ENCODE measurements at regions of chr17 and their contacts with region 1.

Region 1: GRCh38 chr17:35969558-35970380 is 11.5 kb downstream of the CCL16 start:
- DNase-seq: peak; percentile 45 to 80 (median 68)
- H3K4me3 ChIP-seq: no peak overlapping the region
- H3K4me3 Mint-ChIP-seq: no peak overlapping the region
- H3K27ac ChIP-seq: no peak overlapping the region
- H3K27ac Mint-ChIP-seq: peak overlapping the region in 2 of 8 donors; percentile 3 to 73
- H3K4me1 ChIP-seq: no peaks in the 10 kb centered on the region
- H3K4me1 Mint-ChIP-seq: peaks cover 7 to 16% (median 8%) of the 10 kb centered on the region in 3 donors
- H3K27me3 ChIP-seq: no peaks in the 10 kb centered on the region
- H3K27me3 Mint-ChIP-seq: no peaks in the 10 kb centered on the region

Region 2: GRCh38 chr17:35953720-35954119 is 16.0 kb before region 1 on chr17:
- CTCF ChIA-PET with region 1: interaction called, 10 read pairs
- POLR2A ChIA-PET with region 1: no interaction called
- DNase-seq: no peak
- H3K4me3 ChIP-seq: no peak overlapping the region
- H3K4me3 Mint-ChIP-seq: no peak overlapping the region
- H3K27ac ChIP-seq: no peak overlapping the region
- H3K27ac Mint-ChIP-seq: no peak overlapping the region
- H3K4me1 ChIP-seq: no peaks in the 10 kb centered on the region
- H3K4me1 Mint-ChIP-seq: no peaks in the 10 kb centered on the region
- H3K27me3 ChIP-seq: no peaks in the 10 kb centered on the region
- H3K27me3 Mint-ChIP-seq: peaks cover 2 to 3% of the 10 kb centered on the region in 2 donors

Region 3: DNA sequence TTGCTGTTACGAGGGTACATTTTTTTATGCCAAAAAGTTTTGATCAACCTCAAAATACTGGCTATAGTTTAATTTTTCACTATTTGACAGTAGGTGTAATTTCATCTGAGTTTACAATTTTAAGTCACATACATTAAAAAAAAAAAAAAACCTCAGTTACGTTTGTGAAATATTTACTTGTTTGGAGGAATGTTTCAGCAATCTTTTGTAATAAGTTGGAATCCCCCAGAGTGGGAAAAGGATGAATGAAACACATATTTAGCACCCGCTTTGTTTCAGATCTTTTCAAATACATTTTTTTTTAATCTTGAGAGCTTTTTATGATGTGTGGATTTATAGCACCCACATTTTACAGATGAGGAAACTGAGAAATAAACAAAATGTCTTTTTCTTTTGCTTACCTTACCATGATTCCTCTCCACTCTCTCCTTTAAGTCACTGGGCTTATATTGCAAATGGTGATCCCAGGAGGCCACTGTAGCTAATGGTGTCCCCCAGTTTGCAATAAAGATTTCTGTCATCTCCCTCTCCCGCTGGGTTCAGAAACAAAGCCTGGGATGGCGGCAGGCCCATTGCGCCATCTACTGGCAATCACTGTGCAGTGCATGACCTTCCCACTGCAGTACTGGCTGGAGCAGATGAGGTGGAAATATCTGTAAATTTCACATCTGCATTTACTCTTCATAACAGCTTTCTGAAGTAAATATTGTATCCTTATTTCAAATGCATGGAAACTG is 179.0 kb after region 1 on chr17:
- CTCF ChIA-PET with region 1: interaction called, 212 read pairs
- POLR2A ChIA-PET with region 1: no interaction called
- DNase-seq: peak; percentile 49 to 80 (median 67)
- H3K4me3 ChIP-seq: no peak overlapping the region
- H3K4me3 Mint-ChIP-seq: peak overlapping the region in 6 of 7 donors; percentile 22 to 84 (median 67)
- H3K27ac ChIP-seq: no peak overlapping the region
- H3K27ac Mint-ChIP-seq: peak overlapping the region in 5 of 8 donors; percentile 21 to 79 (median 55)
- H3K4me1 ChIP-seq: no peaks in the 10 kb centered on the region
- H3K4me1 Mint-ChIP-seq: peaks cover 4 to 43% (median 39%) of the 10 kb centered on the region in 3 donors
- H3K27me3 ChIP-seq: no peaks in the 10 kb centered on the region
- H3K27me3 Mint-ChIP-seq: peaks cover 5 to 9% of the 10 kb centered on the region in 2 donors